ENCODE measurements at regions of chr3 and their contacts with region 1.

Region 1: GRCh38 chr3:188154014-188154808 is at the start of gene LPP:
- DNase-seq: peak; percentile 91
- H3K4me3 Mint-ChIP-seq: peak within 1 kb of the TSS; percentile 88
- H3K27ac Mint-ChIP-seq: peak within 1 kb of the TSS; percentile 97
- H3K4me1 Mint-ChIP-seq: peaks cover 63% of the 10 kb centered on the region
- H3K27me3 Mint-ChIP-seq: no peaks in the 10 kb centered on the region
- total RNA-seq, gene LPP: 41.0 to 43.6 TPM

Region 2: GRCh38 chr3:187186801-187187421 is 967.3 kb before region 1 on chr3:
- CTCF ChIA-PET with region 1: no interaction called
- POLR2A ChIA-PET with region 1: no interaction called
- intact Hi-C with region 1: no loop called
- DNase-seq: no peak
- H3K4me3 Mint-ChIP-seq: no peak overlapping the region
- H3K27ac Mint-ChIP-seq: no peak overlapping the region
- H3K4me1 Mint-ChIP-seq: no peaks in the 10 kb centered on the region
- H3K27me3 Mint-ChIP-seq: peaks cover 23% of the 10 kb centered on the region

Region 3: DNA sequence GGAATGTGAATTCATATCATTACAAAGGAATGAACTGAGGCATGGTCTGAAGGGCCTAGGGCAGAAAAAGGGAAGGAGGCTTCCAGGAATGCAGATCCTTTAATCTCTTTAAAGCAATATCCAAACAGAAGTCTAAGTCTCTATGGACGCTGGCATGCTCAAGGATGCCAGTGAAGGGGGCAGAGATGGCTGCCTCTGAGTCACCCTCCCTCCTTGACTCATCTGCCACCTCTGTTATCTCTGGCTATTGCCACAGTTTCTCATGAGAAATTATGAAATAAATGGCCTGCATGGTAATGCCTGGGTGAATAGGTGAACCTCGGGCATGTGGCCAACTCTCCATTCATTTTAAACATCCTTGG is 312.6 kb before region 1 on chr3:
- CTCF ChIA-PET with region 1: no interaction called
- POLR2A ChIA-PET with region 1: no interaction called
- intact Hi-C with region 1: no loop called
- DNase-seq: peak; percentile 44
- H3K4me3 Mint-ChIP-seq: no peak overlapping the region
- H3K27ac Mint-ChIP-seq: no peak overlapping the region
- H3K4me1 Mint-ChIP-seq: no peaks in the 10 kb centered on the region
- H3K27me3 Mint-ChIP-seq: no peaks in the 10 kb centered on the region

Region 4: GRCh38 chr3:188123170-188123905 is 30.9 kb before region 1 on chr3:
- CTCF ChIA-PET with region 1: no interaction called
- POLR2A ChIA-PET with region 1: interaction called, 4 read pairs
- intact Hi-C with region 1: loop called (anchors 5 kb)
- DNase-seq: peak; percentile 21
- H3K4me3 Mint-ChIP-seq: no peak overlapping the region
- H3K27ac Mint-ChIP-seq: peak overlapping the region; percentile 63
- H3K4me1 Mint-ChIP-seq: peaks cover 20% of the 10 kb centered on the region
- H3K27me3 Mint-ChIP-seq: peaks cover 1% of the 10 kb centered on the region

Region 5: GRCh38 chr3:188164248-188164687 is 10.1 kb after region 1 on chr3:
- CTCF ChIA-PET with region 1: interaction called, 3 read pairs
- POLR2A ChIA-PET with region 1: interaction called, 8 read pairs
- intact Hi-C with region 1: loop called (anchors 1 kb)
- DNase-seq: peak; percentile 59
- H3K4me3 Mint-ChIP-seq: no peak overlapping the region
- H3K27ac Mint-ChIP-seq: peak overlapping the region; percentile 76
- H3K4me1 Mint-ChIP-seq: peaks cover 62% of the 10 kb centered on the region
- H3K27me3 Mint-ChIP-seq: no peaks in the 10 kb centered on the region

Region 6: GRCh38 chr3:188170461-188171459 is 16.5 kb after region 1 on chr3:
- CTCF ChIA-PET with region 1: interaction called, 3 read pairs
- POLR2A ChIA-PET with region 1: interaction called, 8 read pairs
- intact Hi-C with region 1: loop called (anchors 1 kb)
- DNase-seq: peak; percentile 82
- H3K4me3 Mint-ChIP-seq: peak overlapping the region; percentile 28
- H3K27ac Mint-ChIP-seq: peak overlapping the region; percentile 89
- H3K4me1 Mint-ChIP-seq: peaks cover 58% of the 10 kb centered on the region
- H3K27me3 Mint-ChIP-seq: no peaks in the 10 kb centered on the region

Measured in activated CD4-positive, alpha-beta memory T cell treated with anti-CD3 and anti-CD28 coated beads for 36 hours (primary cell).